ENCODE measurements at regions of chr6 and their contacts with region 1.

Region 1: GRCh38 chr6:157873735-157874344 is 50.8 kb downstream of the SNX9 start:
- DNase-seq: peak; percentile 56 to 72 (median 67)
- H3K4me3 ChIP-seq: no peak overlapping the region
- H3K4me3 Mint-ChIP-seq: no peak overlapping the region
- H3K27ac ChIP-seq: no peak overlapping the region
- H3K27ac Mint-ChIP-seq: no peak overlapping the region
- H3K4me1 ChIP-seq: no peaks in the 10 kb centered on the region
- H3K4me1 Mint-ChIP-seq: no peaks in the 10 kb centered on the region
- H3K27me3 ChIP-seq: no peaks in the 10 kb centered on the region
- H3K27me3 Mint-ChIP-seq: peaks cover 0 to 4% (median 0%) of the 10 kb centered on the region in 3 donors
- CTCF ChIP-seq: peak; percentile 92

Region 2: GRCh38 chr6:157789861-157790260 is 84.0 kb before region 1 on chr6:
- intact Hi-C with region 1: no loop called
- DNase-seq: no peak
- H3K4me3 ChIP-seq: no peak overlapping the region
- H3K4me3 Mint-ChIP-seq: no peak overlapping the region
- H3K27ac ChIP-seq: no peak overlapping the region
- H3K27ac Mint-ChIP-seq: no peak overlapping the region
- H3K4me1 ChIP-seq: no peaks in the 10 kb centered on the region
- H3K4me1 Mint-ChIP-seq: no peaks in the 10 kb centered on the region
- H3K27me3 ChIP-seq: no peaks in the 10 kb centered on the region
- H3K27me3 Mint-ChIP-seq: peaks cover 2 to 7% (median 3%) of the 10 kb centered on the region in 3 donors
- CTCF ChIP-seq: no peak

Region 3: GRCh38 chr6:157838718-157839430 is 35.0 kb before region 1 on chr6:
- intact Hi-C with region 1: loop called (anchors 5 kb)
- DNase-seq: no peak
- H3K4me3 ChIP-seq: no peak overlapping the region
- H3K4me3 Mint-ChIP-seq: no peak overlapping the region
- H3K27ac ChIP-seq: no peak overlapping the region
- H3K27ac Mint-ChIP-seq: no peak overlapping the region
- H3K4me1 ChIP-seq: peaks cover 0 to 1% of the 10 kb centered on the region in 2 donors
- H3K4me1 Mint-ChIP-seq: peaks cover 6% of the 10 kb centered on the region
- H3K27me3 ChIP-seq: no peaks in the 10 kb centered on the region
- H3K27me3 Mint-ChIP-seq: peaks cover 0 to 4% (median 2%) of the 10 kb centered on the region in 3 donors
- CTCF ChIP-seq: no peak